ENCODE measurements at regions of chr16 and their contacts with region 1.

Region 1: GRCh38 chr16:57863434-57864160 is 61.3 kb upstream of the KIFC3 start:
- DNase-seq: peak; percentile 98
- H3K4me3 ChIP-seq: peak overlapping the region; percentile 24
- H3K27ac ChIP-seq: peak overlapping the region; percentile 88
- H3K4me1 ChIP-seq: peaks cover 64% of the 10 kb centered on the region
- H3K27me3 ChIP-seq: no peaks in the 10 kb centered on the region
- CTCF ChIP-seq: peak; percentile 76

Region 2: GRCh38 chr16:57544119-57544653 is 319.4 kb before region 1 on chr16:
- CTCF ChIA-PET with region 1: no interaction called
- POLR2A ChIA-PET with region 1: no interaction called
- intact Hi-C with region 1: no loop called
- DNase-seq: no peak
- H3K4me3 ChIP-seq: no peak overlapping the region
- H3K27ac ChIP-seq: no peak overlapping the region
- H3K4me1 ChIP-seq: no peaks in the 10 kb centered on the region
- H3K27me3 ChIP-seq: no peaks in the 10 kb centered on the region
- CTCF ChIP-seq: no peak

Region 3: GRCh38 chr16:57591086-57591869 is 272.3 kb before region 1 on chr16:
- CTCF ChIA-PET with region 1: no interaction called
- POLR2A ChIA-PET with region 1: no interaction called
- intact Hi-C with region 1: loop called (anchors 10 kb)
- DNase-seq: peak; percentile 84
- H3K4me3 ChIP-seq: no peak overlapping the region
- H3K27ac ChIP-seq: no peak overlapping the region
- H3K4me1 ChIP-seq: peaks cover 10% of the 10 kb centered on the region
- H3K27me3 ChIP-seq: no peaks in the 10 kb centered on the region
- CTCF ChIP-seq: peak; percentile 95

Region 4: DNA sequence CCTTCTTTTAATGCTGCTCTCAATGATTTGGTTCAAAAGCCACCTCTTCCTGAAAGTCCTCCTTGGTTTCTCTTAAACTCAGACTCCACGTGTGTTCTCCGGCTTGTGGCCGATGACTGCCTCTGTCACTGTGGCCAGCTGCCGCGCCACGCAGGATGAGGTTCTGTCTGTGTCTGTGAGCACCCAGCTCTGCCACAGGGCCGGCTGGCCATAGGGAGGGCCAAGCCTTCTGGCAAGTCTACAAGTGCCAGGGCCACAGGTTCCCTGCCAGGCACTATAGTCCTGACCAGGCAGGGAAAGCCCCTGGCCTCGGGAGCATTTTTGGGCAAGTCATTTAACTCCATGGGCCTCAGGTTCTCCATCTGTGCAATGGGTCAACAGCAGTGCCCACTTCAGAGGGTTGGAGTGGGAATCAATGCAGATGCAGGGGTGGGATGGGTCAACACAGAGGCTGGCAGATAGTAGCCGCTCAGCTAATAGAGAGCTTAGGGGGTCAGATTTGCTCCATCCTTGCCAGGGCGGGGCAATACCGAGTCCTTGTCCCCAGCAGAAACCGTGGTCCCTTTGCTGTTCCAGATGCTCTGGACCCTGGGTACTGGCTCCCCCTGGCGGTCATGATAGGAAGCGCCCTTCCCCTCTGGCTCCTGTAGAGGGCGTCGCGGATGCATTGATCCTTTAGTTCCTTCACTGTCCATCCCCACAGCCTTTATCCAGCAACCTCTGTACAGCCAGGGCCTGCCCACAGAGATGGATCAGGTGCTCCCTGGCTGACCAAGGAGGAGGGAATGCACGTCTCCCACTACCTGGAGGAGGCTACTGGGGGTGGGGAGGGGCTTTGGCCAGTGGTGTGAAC is 214.8 kb before region 1 on chr16:
- CTCF ChIA-PET with region 1: no interaction called
- POLR2A ChIA-PET with region 1: no interaction called
- intact Hi-C with region 1: loop called (anchors 1 kb)
- DNase-seq: peak; percentile 87
- H3K4me3 ChIP-seq: no peak overlapping the region
- H3K27ac ChIP-seq: no peak overlapping the region
- H3K4me1 ChIP-seq: no peaks in the 10 kb centered on the region
- H3K27me3 ChIP-seq: no peaks in the 10 kb centered on the region
- CTCF ChIP-seq: peak; percentile 100

Region 5: DNA sequence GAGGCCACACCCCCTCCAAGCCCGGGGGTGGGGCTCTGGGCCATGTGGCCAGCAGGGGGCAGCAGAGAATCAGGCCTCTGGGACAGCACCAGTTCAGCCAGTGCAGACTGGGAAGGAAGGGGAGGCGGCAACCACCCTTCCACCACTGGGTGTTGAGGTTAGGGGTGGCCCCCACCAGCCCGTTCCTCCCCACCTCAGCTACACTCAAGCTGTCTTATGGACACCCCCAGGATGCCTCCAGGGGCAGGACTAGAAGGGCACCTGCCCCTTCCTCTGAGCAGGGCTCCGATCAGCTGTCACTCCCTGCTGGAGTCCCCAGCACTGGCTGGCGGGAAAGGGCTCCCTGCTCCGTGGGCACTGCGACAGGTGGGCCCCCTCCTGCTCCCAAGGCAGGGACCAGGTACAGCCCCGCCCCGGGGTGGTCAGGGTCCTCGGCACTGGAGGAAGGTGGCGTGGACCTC is 106.2 kb before region 1 on chr16:
- CTCF ChIA-PET with region 1: no interaction called
- POLR2A ChIA-PET with region 1: no interaction called
- intact Hi-C with region 1: loop called (anchors 5 kb)
- DNase-seq: peak; percentile 90
- H3K4me3 ChIP-seq: no peak overlapping the region
- H3K27ac ChIP-seq: peak overlapping the region; percentile 78
- H3K4me1 ChIP-seq: peaks cover 28% of the 10 kb centered on the region
- H3K27me3 ChIP-seq: no peaks in the 10 kb centered on the region
- CTCF ChIP-seq: peak; percentile 96

Region 6: DNA sequence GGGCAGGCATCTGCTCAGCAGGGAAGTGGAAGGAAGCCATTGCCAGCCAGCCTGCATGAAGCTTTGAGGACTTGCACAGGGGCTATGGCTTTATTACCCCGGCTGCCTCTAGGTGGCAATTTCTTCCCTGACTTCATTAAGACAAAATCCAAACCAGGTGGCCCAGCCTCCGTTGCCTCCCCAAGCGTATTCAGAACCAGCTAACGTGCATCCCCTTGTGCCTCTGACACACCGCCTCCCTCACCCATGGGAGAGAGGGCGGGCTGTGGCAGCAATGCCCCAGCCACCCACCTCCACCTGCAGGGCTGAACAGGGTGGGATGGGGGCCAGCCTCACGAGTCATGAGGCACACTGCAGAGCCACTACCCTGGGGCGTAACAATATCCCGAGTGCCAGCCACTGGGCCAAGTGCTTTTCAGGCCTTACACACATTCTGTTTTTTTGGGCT is 68.1 kb before region 1 on chr16:
- CTCF ChIA-PET with region 1: interaction called, 14 read pairs
- POLR2A ChIA-PET with region 1: interaction called, 5 read pairs
- intact Hi-C with region 1: loop called (anchors 5 kb)
- DNase-seq: peak; percentile 89
- H3K4me3 ChIP-seq: no peak overlapping the region
- H3K27ac ChIP-seq: peak overlapping the region; percentile 94
- H3K4me1 ChIP-seq: peaks cover 34% of the 10 kb centered on the region
- H3K27me3 ChIP-seq: no peaks in the 10 kb centered on the region
- CTCF ChIP-seq: peak; percentile 65

Region 7: GRCh38 chr16:57846078-57846697 is 17.4 kb before region 1 on chr16:
- CTCF ChIA-PET with region 1: interaction called, 11 read pairs
- POLR2A ChIA-PET with region 1: interaction called, 3 read pairs
- intact Hi-C with region 1: no loop called
- DNase-seq: peak; percentile 89
- H3K4me3 ChIP-seq: peak overlapping the region; percentile 39
- H3K27ac ChIP-seq: peak overlapping the region; percentile 100
- H3K4me1 ChIP-seq: peaks cover 79% of the 10 kb centered on the region
- H3K27me3 ChIP-seq: no peaks in the 10 kb centered on the region
- CTCF ChIP-seq: no peak

Region 8: DNA sequence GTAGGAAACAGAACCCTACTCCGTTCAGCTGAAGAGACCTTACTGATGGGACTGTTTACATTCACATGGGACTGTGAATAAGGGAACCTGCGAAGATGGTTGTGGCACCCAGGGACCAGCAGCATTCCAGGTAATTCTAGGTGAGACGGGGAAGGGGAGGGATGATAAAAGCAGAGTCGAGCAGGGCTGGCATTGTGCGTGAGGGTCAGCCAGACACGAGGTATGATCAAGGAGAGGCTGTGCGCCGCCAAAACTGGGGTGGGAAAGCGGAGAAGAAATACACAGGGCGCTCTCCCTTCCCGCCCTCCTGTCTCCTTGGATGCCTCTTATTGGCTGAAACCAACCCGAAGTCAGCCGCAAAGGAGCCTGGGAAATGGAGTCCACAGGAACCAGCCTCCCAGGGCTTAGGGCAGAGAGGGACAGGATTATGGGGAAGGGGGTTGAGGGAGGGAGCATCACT is 372.7 kb after region 1 on chr16:
- CTCF ChIA-PET with region 1: interaction called, 10 read pairs
- POLR2A ChIA-PET with region 1: no interaction called
- intact Hi-C with region 1: no loop called
- DNase-seq: peak; percentile 84
- H3K4me3 ChIP-seq: peak overlapping the region; percentile 35
- H3K27ac ChIP-seq: no peak overlapping the region
- H3K4me1 ChIP-seq: no peaks in the 10 kb centered on the region
- H3K27me3 ChIP-seq: peaks cover 39% of the 10 kb centered on the region
- CTCF ChIP-seq: no peak